Mammary epithelial cell (primary cell): ENCODE measurements at regions of chr19 and their contacts with region 1.

Region 1: DNA sequence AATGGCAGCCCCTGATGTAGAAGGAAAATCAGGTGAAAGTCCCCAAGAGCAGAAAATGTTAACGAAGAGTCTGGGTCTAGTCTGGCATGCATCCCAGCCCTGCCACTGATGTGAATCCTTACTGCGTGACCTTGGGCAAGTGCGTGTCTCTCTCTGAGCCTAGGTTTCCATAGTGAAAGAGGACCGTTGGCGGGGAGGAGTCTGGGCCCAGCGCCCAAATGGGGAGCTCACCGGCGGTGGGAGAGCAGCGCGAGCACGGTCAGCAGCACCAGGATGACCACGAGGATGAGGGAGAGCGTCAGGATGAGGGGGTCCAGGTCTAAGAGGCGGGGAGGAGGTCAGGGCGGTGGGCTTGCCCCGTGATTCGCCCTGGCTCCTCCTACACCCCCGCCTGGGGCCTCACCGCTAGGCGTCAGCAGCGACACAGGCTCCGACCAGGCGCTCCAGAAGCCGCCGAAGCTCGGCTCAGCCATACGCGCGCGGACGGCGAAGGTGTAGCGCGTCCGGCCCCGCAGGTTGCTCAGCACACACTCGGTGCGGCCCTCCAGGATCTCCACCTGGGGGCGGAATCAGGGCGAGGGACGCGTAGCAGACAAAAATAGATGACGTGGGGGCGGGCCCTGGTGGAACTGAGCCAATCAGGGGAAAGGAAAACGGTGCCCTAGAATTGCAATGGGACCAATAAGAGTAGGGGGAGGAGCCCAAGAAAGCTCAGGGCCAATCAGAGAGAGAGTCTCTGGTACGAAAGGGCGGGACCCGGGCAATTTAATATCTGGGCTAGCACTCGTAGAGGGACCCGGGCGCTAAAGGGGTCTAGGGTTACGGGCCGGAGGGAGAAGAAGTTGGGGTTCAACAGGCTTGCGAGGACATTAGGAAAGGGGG is 3.2 kb downstream of the EPOR start:
- DNase-seq: peak; percentile 98
- H3K4me3 ChIP-seq: peak overlapping the region; percentile 57 to 66 (median 64)
- H3K27ac ChIP-seq: peak overlapping the region; percentile 88
- H3K4me1 ChIP-seq: peaks cover 45% of the 10 kb centered on the region
- H3K27me3 ChIP-seq: no peaks in the 10 kb centered on the region
- CTCF ChIP-seq: peak; percentile 32 to 73

Region 2: GRCh38 chr19:11405846-11406643 is 25.2 kb after region 1 on chr19:
- CTCF ChIA-PET with region 1: interaction called, 9 read pairs
- dilution Hi-C with region 1: no loop called
- in situ Hi-C with region 1: no loop called
- intact Hi-C with region 1: loop called (anchors 1 kb)
- DNase-seq: peak; percentile 24
- H3K4me3 ChIP-seq: peak overlapping the region in 1 of 3 experiments; percentile 20
- H3K27ac ChIP-seq: no peak overlapping the region
- H3K4me1 ChIP-seq: peaks cover 4% of the 10 kb centered on the region
- H3K27me3 ChIP-seq: no peaks in the 10 kb centered on the region
- CTCF ChIP-seq: peak; percentile 21 to 63

Region 3: DNA sequence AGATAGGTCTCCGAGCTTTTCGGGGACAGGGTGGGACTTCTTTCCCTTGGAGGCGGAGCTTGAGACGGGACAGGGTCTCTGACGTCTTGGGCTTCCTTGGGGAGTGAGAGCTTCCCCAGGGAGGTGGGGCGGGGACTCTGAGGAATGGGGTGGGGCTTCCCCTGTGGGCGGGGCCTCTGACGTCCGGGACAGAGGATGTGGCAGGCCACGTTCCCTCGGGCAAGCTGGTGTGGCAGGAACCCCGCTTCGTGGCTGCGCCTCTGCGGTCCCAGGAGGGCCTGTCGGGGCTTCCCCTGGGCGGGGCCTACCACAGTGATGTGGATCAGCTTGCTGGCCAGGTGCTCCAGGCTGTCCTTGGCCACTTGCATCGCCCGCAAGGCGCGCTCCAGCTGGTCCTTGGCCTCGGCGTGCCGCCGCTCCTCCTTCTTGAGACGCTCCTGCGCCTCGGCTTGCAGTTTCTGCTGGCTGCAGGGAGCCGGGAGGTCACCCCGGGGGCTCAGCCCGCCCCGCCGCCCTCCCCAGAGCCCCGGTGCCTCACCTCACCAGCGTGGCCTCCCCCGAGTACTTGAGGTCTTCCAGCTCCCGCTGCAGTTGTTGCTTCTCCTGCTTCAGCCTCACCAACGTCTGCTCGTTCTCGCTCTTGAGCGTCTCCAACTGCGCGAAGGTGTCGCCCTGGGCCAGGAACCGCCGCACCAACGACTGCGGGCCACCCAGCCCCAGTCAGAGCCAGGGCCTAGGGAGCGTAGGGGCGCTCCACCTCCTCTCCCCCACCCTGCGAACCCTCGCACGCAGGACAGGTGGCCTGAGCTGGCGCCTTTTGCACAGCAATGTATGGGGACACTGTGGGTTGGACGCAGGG is 41.5 kb after region 1 on chr19:
- CTCF ChIA-PET with region 1: interaction called, 4 read pairs
- dilution Hi-C with region 1: no loop called
- in situ Hi-C with region 1: no loop called
- intact Hi-C with region 1: loop called (anchors 5 kb)
- DNase-seq: peak; percentile 91
- H3K4me3 ChIP-seq: no peak overlapping the region
- H3K27ac ChIP-seq: no peak overlapping the region
- H3K4me1 ChIP-seq: peaks cover 14% of the 10 kb centered on the region
- H3K27me3 ChIP-seq: peaks cover 2% of the 10 kb centered on the region
- CTCF ChIP-seq: no peak

Region 4: GRCh38 chr19:11435058-11435832 is 54.4 kb after region 1 on chr19 and contains the starts of genes ODAD3 and PRKCSH:
- CTCF ChIA-PET with region 1: no interaction called
- dilution Hi-C with region 1: loop called (anchors 5 kb)
- in situ Hi-C with region 1: no loop called
- intact Hi-C with region 1: loop called (anchors 1 kb)
- DNase-seq: peak; percentile 100
- H3K4me3 ChIP-seq: peak within 1 kb of the TSS; percentile 49 to 87 (median 71)
- H3K27ac ChIP-seq: peak within 1 kb of the TSS; percentile 60
- H3K4me1 ChIP-seq: peaks cover 12% of the 10 kb centered on the region
- H3K27me3 ChIP-seq: no peaks in the 10 kb centered on the region
- CTCF ChIP-seq: peak; percentile 82 to 85
- total RNA-seq, gene ODAD3: 0.17 to 1.1 TPM
- total RNA-seq, gene PRKCSH: 118 to 290 TPM

Region 5: DNA sequence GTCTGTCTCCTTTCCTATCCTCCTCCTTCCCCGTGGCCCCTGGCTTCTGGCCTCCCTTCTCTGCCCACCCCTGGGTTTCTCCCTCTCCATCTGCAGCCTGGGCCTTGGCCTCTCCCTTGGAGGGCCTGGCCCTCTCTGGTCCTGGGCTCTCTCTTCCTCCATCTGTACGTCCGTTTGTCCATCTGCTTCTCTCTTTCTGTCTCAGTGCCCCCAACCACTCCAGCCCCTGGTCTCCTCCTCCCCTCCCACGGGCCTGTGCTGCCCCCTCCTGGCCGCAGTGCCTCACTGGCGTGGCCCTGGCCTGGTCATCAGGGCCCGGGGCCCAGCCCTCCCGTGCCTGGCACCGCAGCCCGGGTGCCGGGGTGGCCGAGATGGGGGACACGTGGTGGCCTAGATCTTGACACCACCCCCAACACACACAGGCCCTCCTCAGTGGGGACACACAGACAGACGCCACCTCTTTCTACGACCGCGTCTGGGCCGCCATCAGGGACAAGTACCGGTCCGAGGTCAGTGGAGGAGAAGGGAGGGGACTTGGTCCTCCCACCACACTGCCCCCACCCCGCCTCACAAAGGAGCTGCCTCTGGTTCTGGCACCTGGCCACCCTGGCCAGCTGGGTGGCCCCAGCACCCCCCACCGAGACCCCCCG is 65.9 kb after region 1 on chr19:
- CTCF ChIA-PET with region 1: interaction called, 5 read pairs
- dilution Hi-C with region 1: loop called (anchors 5 kb)
- in situ Hi-C with region 1: no loop called
- intact Hi-C with region 1: loop called (anchors 2 kb)
- DNase-seq: no peak
- H3K4me3 ChIP-seq: no peak overlapping the region
- H3K27ac ChIP-seq: no peak overlapping the region
- H3K4me1 ChIP-seq: peaks cover 16% of the 10 kb centered on the region
- H3K27me3 ChIP-seq: no peaks in the 10 kb centered on the region
- CTCF ChIP-seq: peak; percentile 51 to 75

Region 6: GRCh38 chr19:11482384-11483050 is 101.6 kb after region 1 on chr19:
- CTCF ChIA-PET with region 1: interaction called, 5 read pairs
- dilution Hi-C with region 1: no loop called
- in situ Hi-C with region 1: no loop called
- intact Hi-C with region 1: loop called (anchors 1 kb)
- DNase-seq: peak; percentile 69
- H3K4me3 ChIP-seq: peak overlapping the region; percentile 31 to 40 (median 35)
- H3K27ac ChIP-seq: no peak overlapping the region
- H3K4me1 ChIP-seq: peaks cover 9% of the 10 kb centered on the region
- H3K27me3 ChIP-seq: peaks cover 25% of the 10 kb centered on the region
- CTCF ChIP-seq: peak; percentile 61 to 91

Region 7: DNA sequence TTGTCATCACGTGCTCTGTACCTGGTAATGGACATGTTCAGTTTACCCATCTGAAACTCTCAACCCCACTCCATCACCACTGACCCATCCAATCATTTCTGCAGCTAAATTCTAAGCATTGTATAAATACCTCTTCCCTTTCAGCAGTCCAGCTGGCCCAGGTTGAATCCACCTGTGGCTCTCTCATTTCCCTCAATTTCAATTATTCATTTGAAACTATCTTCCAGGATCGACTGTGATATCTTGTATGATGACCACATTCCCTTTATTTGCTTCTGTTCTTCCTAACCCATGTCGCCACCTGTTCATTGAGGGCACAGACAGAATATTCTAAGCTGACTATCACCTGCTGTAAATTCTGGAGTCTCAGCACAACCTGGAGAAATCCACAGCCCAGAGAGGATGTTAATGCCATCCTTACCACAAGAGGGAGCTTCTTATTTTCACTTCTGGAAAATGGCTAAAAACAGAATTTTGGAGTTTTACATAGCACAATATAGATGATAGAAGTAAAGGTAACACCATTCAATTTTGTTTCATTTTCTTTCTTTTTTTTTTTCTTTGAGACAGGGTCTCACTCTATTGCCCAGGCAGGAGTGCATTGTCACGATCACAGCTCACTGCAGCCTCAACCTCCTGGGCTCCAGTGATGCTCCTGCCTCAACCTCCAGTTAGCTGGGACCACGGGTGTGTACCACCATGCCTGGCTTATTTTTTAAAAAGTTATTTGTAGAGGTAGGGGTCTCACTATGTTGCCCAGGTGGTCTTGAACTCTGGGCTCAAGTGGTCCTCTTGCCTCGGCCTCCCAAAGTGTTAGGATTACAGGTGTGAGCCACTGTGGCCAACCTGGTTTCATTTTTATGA is 319.3 kb after region 1 on chr19:
- CTCF ChIA-PET with region 1: interaction called, 11 read pairs
- dilution Hi-C with region 1: no loop called
- in situ Hi-C with region 1: no loop called
- intact Hi-C with region 1: no loop called
- DNase-seq: peak; percentile 6
- H3K4me3 ChIP-seq: no peak overlapping the region
- H3K27ac ChIP-seq: no peak overlapping the region
- H3K4me1 ChIP-seq: no peaks in the 10 kb centered on the region
- H3K27me3 ChIP-seq: no peaks in the 10 kb centered on the region
- CTCF ChIP-seq: peak; percentile 62 to 69